ENCODE measurements at regions of chr7 and their contacts with region 1.

Region 1: GRCh38 chr7:2863461-2864066 is 19.5 kb upstream of the GNA12 start:
- DNase-seq: peak in 13 of 14 experiments; percentile 27 to 87 (median 59)
- ATAC-seq: peak; percentile 87
- H3K4me3 ChIP-seq: peak overlapping the region; percentile 40
- H3K4me3 Mint-ChIP-seq: peak overlapping the region; percentile 46
- H3K27ac ChIP-seq: peak overlapping the region; percentile 22 to 73
- H3K27ac Mint-ChIP-seq: peak overlapping the region; percentile 83
- H3K4me1 ChIP-seq: peaks cover 31% of the 10 kb centered on the region
- H3K4me1 Mint-ChIP-seq: peaks cover 18% of the 10 kb centered on the region
- H3K27me3 ChIP-seq: no peaks in the 10 kb centered on the region
- H3K27me3 Mint-ChIP-seq: no peaks in the 10 kb centered on the region
- CTCF ChIP-seq: no peak

Region 2: DNA sequence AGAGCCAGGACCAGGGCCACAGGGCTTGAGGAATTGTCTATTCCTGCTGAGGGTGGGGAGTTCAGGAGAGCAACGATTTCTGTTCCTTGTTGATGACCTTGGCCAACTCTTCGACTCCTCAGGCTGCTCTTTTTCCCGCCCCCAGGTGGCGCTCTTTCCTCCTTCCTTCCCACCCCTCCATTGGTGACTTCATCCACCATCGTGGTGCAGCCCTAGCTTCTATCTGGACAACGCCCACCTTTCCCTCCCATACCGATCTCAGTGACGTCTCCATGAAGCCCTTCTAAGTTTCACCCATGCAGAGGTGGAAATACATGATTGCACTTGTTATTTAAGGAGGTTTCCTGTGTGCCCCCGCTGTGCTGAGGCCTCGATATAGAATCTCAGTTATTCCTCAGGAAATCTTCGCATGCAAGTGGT is 202.2 kb after region 1 on chr7:
- CTCF ChIA-PET with region 1: interaction called, 4 read pairs
- POLR2A ChIA-PET with region 1: no interaction called
- intact Hi-C with region 1: loop called in 1 of 2 experiments (anchors 2 kb)
- DNase-seq: peak in 13 of 14 experiments; percentile 44 to 82 (median 52)
- ATAC-seq: peak; percentile 36
- H3K4me3 ChIP-seq: no peak overlapping the region
- H3K4me3 Mint-ChIP-seq: peak overlapping the region; percentile 56
- H3K27ac ChIP-seq: peak overlapping the region in 1 of 2 donors; percentile 18
- H3K27ac Mint-ChIP-seq: peak overlapping the region; percentile 86
- H3K4me1 ChIP-seq: peaks cover 82% of the 10 kb centered on the region
- H3K4me1 Mint-ChIP-seq: peaks cover 84% of the 10 kb centered on the region
- H3K27me3 ChIP-seq: no peaks in the 10 kb centered on the region
- H3K27me3 Mint-ChIP-seq: no peaks in the 10 kb centered on the region
- CTCF ChIP-seq: peak; percentile 70

Region 3: GRCh38 chr7:3200504-3200903 is 336.9 kb after region 1 on chr7:
- CTCF ChIA-PET with region 1: no interaction called
- POLR2A ChIA-PET with region 1: no interaction called
- intact Hi-C with region 1: loop called in 1 of 2 experiments (anchors 1 kb)
- DNase-seq: peak in 6 of 14 experiments; percentile 2 to 34 (median 23)
- ATAC-seq: no peak
- H3K4me3 ChIP-seq: no peak overlapping the region
- H3K4me3 Mint-ChIP-seq: no peak overlapping the region
- H3K27ac ChIP-seq: no peak overlapping the region
- H3K27ac Mint-ChIP-seq: no peak overlapping the region
- H3K4me1 ChIP-seq: no peaks in the 10 kb centered on the region
- H3K4me1 Mint-ChIP-seq: no peaks in the 10 kb centered on the region
- H3K27me3 ChIP-seq: no peaks in the 10 kb centered on the region
- H3K27me3 Mint-ChIP-seq: no peaks in the 10 kb centered on the region
- CTCF ChIP-seq: peak; percentile 45

Region 4: DNA sequence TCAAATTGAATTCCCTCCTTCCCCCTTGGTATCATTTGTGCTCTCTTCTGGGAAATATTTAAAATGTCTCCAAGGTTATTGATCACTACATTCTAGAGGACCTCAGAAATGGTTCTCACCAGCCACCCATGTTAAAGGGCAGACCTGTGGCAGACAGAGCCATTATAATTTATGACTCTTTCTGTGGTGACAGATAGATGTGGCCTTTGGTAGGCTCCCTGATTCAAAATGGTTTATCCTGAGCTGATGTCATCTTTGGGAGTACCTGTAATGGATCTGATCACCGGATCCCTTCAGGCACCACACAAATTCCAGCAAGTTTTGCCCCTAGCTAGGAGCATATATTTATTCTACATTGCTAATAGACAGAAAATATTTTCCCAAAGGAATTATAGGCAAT is 705.0 kb after region 1 on chr7:
- CTCF ChIA-PET with region 1: no interaction called
- POLR2A ChIA-PET with region 1: no interaction called
- intact Hi-C with region 1: no loop called
- DNase-seq: no peak
- ATAC-seq: no peak
- H3K4me3 ChIP-seq: no peak overlapping the region
- H3K4me3 Mint-ChIP-seq: no peak overlapping the region
- H3K27ac ChIP-seq: no peak overlapping the region
- H3K27ac Mint-ChIP-seq: no peak overlapping the region
- H3K4me1 ChIP-seq: no peaks in the 10 kb centered on the region
- H3K4me1 Mint-ChIP-seq: peaks cover 9% of the 10 kb centered on the region
- H3K27me3 ChIP-seq: no peaks in the 10 kb centered on the region
- H3K27me3 Mint-ChIP-seq: no peaks in the 10 kb centered on the region
- CTCF ChIP-seq: no peak

Region 5: GRCh38 chr7:3673524-3673923 is 810.0 kb after region 1 on chr7:
- CTCF ChIA-PET with region 1: no interaction called
- POLR2A ChIA-PET with region 1: no interaction called
- intact Hi-C with region 1: loop called in 1 of 2 experiments (anchors 10 kb)
- DNase-seq: peak; percentile 32 to 72 (median 47)
- ATAC-seq: no peak
- H3K4me3 ChIP-seq: no peak overlapping the region
- H3K4me3 Mint-ChIP-seq: no peak overlapping the region
- H3K27ac ChIP-seq: no peak overlapping the region
- H3K27ac Mint-ChIP-seq: no peak overlapping the region
- H3K4me1 ChIP-seq: no peaks in the 10 kb centered on the region
- H3K4me1 Mint-ChIP-seq: peaks cover 8% of the 10 kb centered on the region
- H3K27me3 ChIP-seq: no peaks in the 10 kb centered on the region
- H3K27me3 Mint-ChIP-seq: no peaks in the 10 kb centered on the region
- CTCF ChIP-seq: peak; percentile 53

Region 6: GRCh38 chr7:4479367-4480039 is 1615.9 kb after region 1 on chr7:
- CTCF ChIA-PET with region 1: no interaction called
- POLR2A ChIA-PET with region 1: no interaction called
- intact Hi-C with region 1: loop called in 1 of 2 experiments (anchors 5 kb)
- DNase-seq: peak in 3 of 14 experiments; percentile 1 to 25 (median 14)
- ATAC-seq: no peak
- H3K4me3 ChIP-seq: no peak overlapping the region
- H3K4me3 Mint-ChIP-seq: no peak overlapping the region
- H3K27ac ChIP-seq: no peak overlapping the region
- H3K27ac Mint-ChIP-seq: no peak overlapping the region
- H3K4me1 ChIP-seq: no peaks in the 10 kb centered on the region
- H3K4me1 Mint-ChIP-seq: no peaks in the 10 kb centered on the region
- H3K27me3 ChIP-seq: peaks cover 0 to 5% of the 10 kb centered on the region in 2 experiments
- H3K27me3 Mint-ChIP-seq: peaks cover 10% of the 10 kb centered on the region
- CTCF ChIP-seq: no peak

Measured in CD4-positive, alpha-beta T cell (primary cell).